ENCODE measurements at regions of chr3 and their contacts with region 1.

Region 1: GRCh38 chr3:15064835-15065549 is at the start of gene MRPS25:
- H3K4me3 Mint-ChIP-seq: peak within 1 kb of the TSS; percentile 91
- H3K27ac Mint-ChIP-seq: peak within 1 kb of the TSS; percentile 97
- H3K4me1 Mint-ChIP-seq: peaks cover 16% of the 10 kb centered on the region
- H3K27me3 Mint-ChIP-seq: no peaks in the 10 kb centered on the region

Region 2: GRCh38 chr3:14947886-14948555 is 117.0 kb before region 1 on chr3:
- intact Hi-C with region 1: loop called (anchors 2 kb)
- H3K4me3 Mint-ChIP-seq: peak overlapping the region; percentile 100
- H3K27ac Mint-ChIP-seq: peak overlapping the region; percentile 100
- H3K4me1 Mint-ChIP-seq: peaks cover 42% of the 10 kb centered on the region
- H3K27me3 Mint-ChIP-seq: no peaks in the 10 kb centered on the region

Region 3: DNA sequence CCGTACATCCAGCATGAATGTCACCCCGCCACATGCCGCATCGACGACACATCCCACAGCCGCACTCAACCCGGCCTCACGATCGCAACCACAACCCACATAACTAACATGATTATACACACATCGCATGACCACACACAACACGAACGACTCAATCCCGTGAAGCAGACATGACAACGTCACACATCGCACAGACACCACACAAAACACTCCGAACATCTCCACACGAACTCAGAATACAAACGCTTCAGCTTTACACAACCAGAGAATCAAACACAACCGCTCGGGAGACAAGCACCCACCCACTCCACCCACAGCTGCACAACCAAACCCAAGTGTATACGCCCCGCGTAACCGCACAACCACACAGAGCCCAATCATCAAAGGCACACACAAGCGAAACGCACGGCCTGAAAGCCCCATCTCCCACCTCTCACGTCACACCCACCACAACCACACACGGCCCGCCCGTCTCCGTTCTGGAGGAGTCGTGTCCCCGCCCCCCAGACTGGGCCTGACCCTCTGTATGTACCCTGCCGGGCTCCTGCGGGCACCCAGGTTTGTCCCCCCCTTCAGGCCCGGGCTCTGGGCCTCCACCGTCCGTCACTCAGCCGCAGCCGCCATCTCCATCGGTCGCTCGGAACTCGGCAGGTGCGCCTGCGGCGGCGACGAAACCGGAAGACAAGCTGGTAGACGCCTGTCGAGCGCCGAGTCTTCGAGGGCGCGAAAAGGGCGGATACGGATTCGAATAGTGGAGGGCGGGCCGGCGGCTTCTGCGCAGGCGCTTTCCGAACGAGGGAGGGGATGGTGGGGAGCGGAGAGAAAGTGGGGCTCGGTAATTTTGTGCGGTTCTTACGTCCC is 33.7 kb after region 1 on chr3 and contains the start of gene RBSN:
- intact Hi-C with region 1: loop called (anchors 2 kb)
- H3K4me3 Mint-ChIP-seq: peak within 1 kb of the TSS; percentile 88
- H3K27ac Mint-ChIP-seq: peak within 1 kb of the TSS; percentile 95
- H3K4me1 Mint-ChIP-seq: peaks cover 49% of the 10 kb centered on the region
- H3K27me3 Mint-ChIP-seq: no peaks in the 10 kb centered on the region

Region 4: GRCh38 chr3:15345608-15346137 is 280.7 kb after region 1 on chr3:
- intact Hi-C with region 1: no loop called
- H3K4me3 Mint-ChIP-seq: no peak overlapping the region
- H3K27ac Mint-ChIP-seq: no peak overlapping the region
- H3K4me1 Mint-ChIP-seq: peaks cover 75% of the 10 kb centered on the region
- H3K27me3 Mint-ChIP-seq: peaks cover 9% of the 10 kb centered on the region

Region 5: GRCh38 chr3:15361494-15362212 is 296.7 kb after region 1 on chr3:
- intact Hi-C with region 1: no loop called
- H3K4me3 Mint-ChIP-seq: peak overlapping the region; percentile 10
- H3K27ac Mint-ChIP-seq: peak overlapping the region; percentile 65
- H3K4me1 Mint-ChIP-seq: peaks cover 28% of the 10 kb centered on the region
- H3K27me3 Mint-ChIP-seq: peaks cover 7% of the 10 kb centered on the region